K562 (cell line): ENCODE measurements at regions of chr19 and their contacts with region 1.

Region 1: GRCh38 chr19:46860125-46860845 is 512 bp upstream of the ARHGAP35 start:
- DNase-seq: peak; percentile 93 to 99 (median 95)
- ATAC-seq: peak; percentile 86
- H3K4me3 ChIP-seq: peak overlapping the region; percentile 73
- H3K27ac ChIP-seq: peak overlapping the region; percentile 99
- H3K4me1 ChIP-seq: peaks cover 31 to 33% of the 10 kb centered on the region in 2 experiments; a peak in 4 of 5 replicates
- H3K27me3 ChIP-seq: no peaks in the 10 kb centered on the region
- CTCF ChIP-seq: no peak
- EP300 ChIP-seq: no peak; the same call in 1 of the 2 replicates
- POLR2A ChIP-seq: peak; percentile 95
- RAD21 ChIP-seq: 0 out of 4 replicates have a peak, but pooled peaks have one; percentile 11

Region 2: DNA sequence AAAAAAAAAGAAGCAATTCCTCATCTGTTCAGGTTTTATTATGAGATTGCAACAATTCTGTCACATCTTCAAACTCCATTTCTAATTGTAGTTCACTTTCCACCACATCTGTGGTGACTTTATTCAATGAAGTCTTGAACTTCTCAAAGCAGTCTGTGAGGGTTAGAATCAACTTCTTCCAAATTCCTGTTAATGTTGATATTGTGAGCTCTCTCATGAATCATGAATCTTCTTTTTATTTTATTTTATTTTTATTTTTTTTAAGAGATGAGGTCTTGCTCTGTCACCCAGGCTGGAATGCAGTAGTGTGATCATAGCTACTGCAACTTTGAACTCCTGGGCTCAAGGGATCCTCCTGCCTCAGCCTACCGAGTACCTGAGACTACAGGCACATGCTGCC is 20.1 kb after region 1 on chr19:
- CTCF ChIA-PET with region 1: no interaction called
- POLR2A ChIA-PET with region 1: interaction called, 11 read pairs
- in situ Hi-C with region 1: no loop called
- intact Hi-C with region 1: no loop called
- DNase-seq: no peak
- ATAC-seq: no peak
- H3K4me3 ChIP-seq: no peak overlapping the region
- H3K27ac ChIP-seq: no peak overlapping the region
- H3K4me1 ChIP-seq: no peaks in the 10 kb centered on the region; a peak in 1 of 5 replicates
- H3K27me3 ChIP-seq: no peaks in the 10 kb centered on the region
- CTCF ChIP-seq: no peak
- EP300 ChIP-seq: no peak
- POLR2A ChIP-seq: no peak
- RAD21 ChIP-seq: no peak

Region 3: DNA sequence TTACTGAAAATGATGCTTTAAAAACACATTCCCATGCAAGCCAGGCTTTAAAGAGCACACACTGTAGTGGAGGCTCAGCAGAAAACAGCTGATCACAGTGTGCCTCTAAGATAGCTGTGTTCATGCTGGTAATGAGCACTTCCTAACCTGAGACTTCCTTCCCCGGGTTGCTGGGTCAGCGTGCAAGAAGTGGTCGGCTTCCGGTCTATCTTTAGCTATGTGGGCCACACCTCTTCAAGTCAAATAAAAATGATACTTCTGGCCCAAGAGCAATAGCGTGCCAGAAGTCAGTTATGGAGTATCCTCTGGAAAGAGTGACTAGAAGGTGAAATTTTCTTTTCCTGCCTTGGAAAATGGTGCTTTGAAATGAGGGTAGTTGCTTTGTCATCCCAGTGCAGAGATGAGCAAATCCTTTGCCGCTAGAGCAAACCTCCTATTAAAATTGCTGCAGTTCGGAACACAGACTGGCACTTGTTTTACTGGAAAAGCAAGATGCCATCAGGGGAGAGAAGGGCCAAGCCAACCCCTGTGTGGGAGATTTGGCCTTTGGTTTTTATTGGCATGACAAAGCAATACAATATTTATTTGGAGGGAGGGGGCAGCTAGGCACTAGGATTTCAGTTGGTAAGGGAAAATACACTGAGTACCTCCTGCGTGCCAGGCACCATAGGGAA is 64.7 kb after region 1 on chr19:
- CTCF ChIA-PET with region 1: no interaction called
- POLR2A ChIA-PET with region 1: interaction called, 4 read pairs
- in situ Hi-C with region 1: no loop called
- intact Hi-C with region 1: loop called (anchors 5 kb)
- DNase-seq: peak; percentile 55 to 76 (median 65)
- ATAC-seq: peak; percentile 94
- H3K4me3 ChIP-seq: no peak overlapping the region
- H3K27ac ChIP-seq: peak overlapping the region; percentile 3; the same call in 2 of the 3 replicates
- H3K4me1 ChIP-seq: peaks cover 0 to 28% of the 10 kb centered on the region in 2 experiments; a peak in 3 of 5 replicates
- H3K27me3 ChIP-seq: no peaks in the 10 kb centered on the region
- CTCF ChIP-seq: no peak
- EP300 ChIP-seq: peak; percentile 21; the same call in 1 of the 2 replicates
- POLR2A ChIP-seq: no peak
- RAD21 ChIP-seq: no peak

Region 4: GRCh38 chr19:46975925-46976782 is 115.9 kb after region 1 on chr19:
- CTCF ChIA-PET with region 1: no interaction called
- POLR2A ChIA-PET with region 1: no interaction called
- in situ Hi-C with region 1: no loop called
- intact Hi-C with region 1: no loop called
- DNase-seq: peak in 1 of 4 experiments; percentile 34
- ATAC-seq: peak; percentile 35
- H3K4me3 ChIP-seq: no peak overlapping the region
- H3K27ac ChIP-seq: peak overlapping the region; percentile 31; the same call in 2 of the 3 replicates
- H3K4me1 ChIP-seq: peaks cover 18 to 23% of the 10 kb centered on the region in 2 experiments
- H3K27me3 ChIP-seq: no peaks in the 10 kb centered on the region
- CTCF ChIP-seq: no peak
- EP300 ChIP-seq: no peak
- POLR2A ChIP-seq: no peak
- RAD21 ChIP-seq: no peak

Region 5: GRCh38 chr19:46990991-46991676 is 130.8 kb after region 1 on chr19:
- CTCF ChIA-PET with region 1: interaction called, 15 read pairs
- POLR2A ChIA-PET with region 1: no interaction called
- in situ Hi-C with region 1: no loop called
- intact Hi-C with region 1: loop called (anchors 1 kb)
- DNase-seq: peak; percentile 73 to 86 (median 80)
- ATAC-seq: peak; percentile 92
- H3K4me3 ChIP-seq: no peak overlapping the region
- H3K27ac ChIP-seq: peak overlapping the region; percentile 24; the same call in 2 of the 3 replicates
- H3K4me1 ChIP-seq: peaks cover 8 to 28% of the 10 kb centered on the region in 2 experiments; a peak in 4 of 5 replicates
- H3K27me3 ChIP-seq: no peaks in the 10 kb centered on the region
- CTCF ChIP-seq: peak; percentile 88 to 92 (median 91)
- EP300 ChIP-seq: 0 out of 2 replicates have a peak, but pooled peaks have one; percentile 14
- POLR2A ChIP-seq: no peak
- RAD21 ChIP-seq: peak; percentile 86 to 95

Region 6: DNA sequence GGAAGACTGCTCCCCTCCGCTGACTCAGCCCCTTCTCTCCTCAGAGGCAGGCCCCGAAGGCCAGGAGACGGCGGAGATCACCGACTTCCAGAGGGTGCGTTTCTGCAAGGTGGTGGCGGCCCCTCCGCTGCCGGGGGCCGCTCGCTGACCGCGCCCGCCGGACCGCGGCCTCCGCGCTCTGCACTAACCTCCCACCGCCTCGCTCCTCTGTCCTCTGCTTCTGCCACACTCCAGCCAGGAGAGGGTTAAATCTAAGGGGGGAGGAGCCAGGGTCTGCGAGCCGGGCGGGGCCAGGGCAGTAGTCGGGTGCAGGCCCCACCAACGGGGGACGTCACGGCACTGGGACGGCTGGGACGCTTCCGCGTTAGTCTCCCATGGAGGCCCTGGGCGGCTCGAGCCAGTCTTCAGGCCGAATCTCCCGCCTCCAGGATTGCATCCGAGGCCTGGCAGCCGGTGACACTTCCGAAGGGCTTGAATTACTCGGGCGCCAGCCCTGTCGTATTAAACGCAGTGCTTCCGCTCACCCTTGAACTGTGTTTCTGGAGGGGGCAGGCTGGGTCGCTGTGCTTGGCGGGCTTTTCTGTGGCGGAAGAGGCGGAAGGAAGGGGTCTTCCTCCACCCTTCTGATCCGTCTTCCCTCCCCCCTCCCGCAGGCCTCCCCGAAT is 413.2 kb after region 1 on chr19:
- CTCF ChIA-PET with region 1: no interaction called
- POLR2A ChIA-PET with region 1: no interaction called
- in situ Hi-C with region 1: no loop called
- intact Hi-C with region 1: no loop called
- DNase-seq: peak; percentile 85 to 97 (median 89)
- ATAC-seq: peak; percentile 85
- H3K4me3 ChIP-seq: peak overlapping the region; percentile 74
- H3K27ac ChIP-seq: peak overlapping the region; percentile 95
- H3K4me1 ChIP-seq: peaks cover 33 to 67% of the 10 kb centered on the region in 2 experiments
- H3K27me3 ChIP-seq: no peaks in the 10 kb centered on the region
- CTCF ChIP-seq: no peak
- EP300 ChIP-seq: no peak
- POLR2A ChIP-seq: peak; percentile 92
- RAD21 ChIP-seq: no peak